Colonic mucosa (tissue), 4 donors: ENCODE measurements at regions of chr12 and their contacts with region 1.

Region 1: GRCh38 chr12:106919910-106920544 is 35.7 kb upstream of the TMEM263 start:
- DNase-seq: no peak
- H3K4me3 ChIP-seq: no peak overlapping the region
- H3K27ac ChIP-seq: no peak overlapping the region
- H3K4me1 ChIP-seq: no peaks in the 10 kb centered on the region
- H3K27me3 ChIP-seq: no peaks in the 10 kb centered on the region
- CTCF ChIP-seq: peak; percentile 73

Region 2: GRCh38 chr12:106386813-106387535 is 533.1 kb before region 1 on chr12:
- intact Hi-C with region 1: loop called (anchors 2 kb)
- DNase-seq: no peak
- H3K4me3 ChIP-seq: no peak overlapping the region
- H3K27ac ChIP-seq: no peak overlapping the region
- H3K4me1 ChIP-seq: no peaks in the 10 kb centered on the region
- H3K27me3 ChIP-seq: no peaks in the 10 kb centered on the region
- CTCF ChIP-seq: no peak

Region 3: GRCh38 chr12:106682592-106683234 is 237.3 kb before region 1 on chr12:
- intact Hi-C with region 1: loop called (anchors 5 kb)
- DNase-seq: no peak
- H3K4me3 ChIP-seq: no peak overlapping the region
- H3K27ac ChIP-seq: no peak overlapping the region
- H3K4me1 ChIP-seq: no peaks in the 10 kb centered on the region
- H3K27me3 ChIP-seq: no peaks in the 10 kb centered on the region
- CTCF ChIP-seq: peak; percentile 20

Region 4: DNA sequence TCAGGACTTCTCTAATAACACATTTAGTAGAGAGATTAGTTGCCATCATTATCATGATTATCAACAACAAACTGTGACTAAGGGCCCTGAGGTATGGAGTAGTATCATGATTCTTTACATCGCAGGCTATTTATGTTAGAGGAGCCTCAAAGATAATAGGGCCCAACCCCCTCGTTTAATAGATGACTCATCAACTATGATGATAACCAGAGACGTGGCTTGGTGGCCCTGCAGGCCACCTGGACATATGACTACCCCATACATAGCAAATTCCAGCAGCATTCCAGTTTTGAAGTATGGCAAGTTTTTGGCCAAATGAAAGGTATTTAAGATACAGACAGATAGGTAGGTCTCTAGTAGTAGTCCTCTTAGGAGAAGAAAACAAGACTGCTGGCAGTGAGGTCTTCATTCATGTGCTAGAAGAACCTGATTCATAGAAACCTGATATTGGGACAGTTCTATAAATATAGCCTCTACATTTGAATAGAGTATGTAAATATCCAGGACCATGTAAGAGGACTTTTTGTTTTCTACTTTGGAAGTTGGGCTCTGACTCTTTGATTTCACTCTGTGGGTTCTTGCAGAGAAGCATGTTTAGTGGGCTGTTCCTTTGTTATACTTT is 139.9 kb before region 1 on chr12:
- intact Hi-C with region 1: no loop called
- DNase-seq: no peak
- H3K4me3 ChIP-seq: no peak overlapping the region
- H3K27ac ChIP-seq: no peak overlapping the region
- H3K4me1 ChIP-seq: no peaks in the 10 kb centered on the region
- H3K27me3 ChIP-seq: no peaks in the 10 kb centered on the region
- CTCF ChIP-seq: no peak

Region 5: DNA sequence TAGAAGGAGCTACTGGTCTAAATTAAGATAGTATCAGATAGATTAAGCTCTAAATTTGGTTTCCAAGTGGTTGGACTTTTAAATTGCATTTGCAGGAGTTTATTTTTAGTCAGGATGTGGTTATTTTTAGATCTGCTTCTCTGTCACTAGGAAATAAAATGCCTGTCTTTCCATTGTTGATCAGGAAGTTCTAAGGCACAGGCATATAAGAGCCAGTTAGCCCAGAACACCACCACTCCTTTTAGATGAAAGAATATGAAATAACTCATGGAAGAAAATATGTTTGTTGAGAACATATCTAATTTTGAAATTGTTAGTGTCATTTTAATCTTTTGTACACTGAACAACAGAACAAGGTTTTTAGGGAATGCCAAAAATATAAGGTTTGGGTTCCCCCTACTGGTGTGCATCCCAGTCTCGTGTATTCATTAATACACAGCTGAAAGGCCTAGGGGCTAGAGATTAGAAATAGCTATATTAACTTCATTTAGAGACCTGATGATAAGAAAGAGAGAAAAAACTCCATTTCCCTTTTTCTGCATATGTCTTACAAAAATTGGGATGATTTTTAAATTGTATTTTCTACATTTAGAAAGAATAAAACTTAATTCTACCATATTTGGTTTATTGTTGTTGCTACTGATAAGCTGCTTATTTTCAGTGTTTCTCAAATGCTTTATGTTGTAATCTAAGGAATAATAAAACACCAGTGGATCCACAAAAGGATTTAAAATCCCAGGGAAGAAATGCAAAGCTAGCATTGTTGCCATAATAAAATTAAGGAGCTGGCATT is 78.3 kb before region 1 on chr12:
- intact Hi-C with region 1: loop called (anchors 10 kb)
- DNase-seq: peak; percentile 56
- H3K4me3 ChIP-seq: no peak overlapping the region
- H3K27ac ChIP-seq: no peak overlapping the region
- H3K4me1 ChIP-seq: no peaks in the 10 kb centered on the region
- H3K27me3 ChIP-seq: no peaks in the 10 kb centered on the region
- CTCF ChIP-seq: peak; percentile 52

Region 6: GRCh38 chr12:106955377-106956047 is 35.5 kb after region 1 on chr12 and contains the start of gene TMEM263:
- intact Hi-C with region 1: no loop called
- DNase-seq: peak; percentile 87
- H3K4me3 ChIP-seq: peak within 1 kb of the TSS; percentile 79
- H3K27ac ChIP-seq: peak within 1 kb of the TSS; percentile 93
- H3K4me1 ChIP-seq: peaks cover 5% of the 10 kb centered on the region
- H3K27me3 ChIP-seq: no peaks in the 10 kb centered on the region
- CTCF ChIP-seq: no peak
- total RNA-seq, gene TMEM263: 29.6 to 41.9 TPM